ENCODE measurements at regions of chrX and their contacts with region 1.

Region 1: DNA sequence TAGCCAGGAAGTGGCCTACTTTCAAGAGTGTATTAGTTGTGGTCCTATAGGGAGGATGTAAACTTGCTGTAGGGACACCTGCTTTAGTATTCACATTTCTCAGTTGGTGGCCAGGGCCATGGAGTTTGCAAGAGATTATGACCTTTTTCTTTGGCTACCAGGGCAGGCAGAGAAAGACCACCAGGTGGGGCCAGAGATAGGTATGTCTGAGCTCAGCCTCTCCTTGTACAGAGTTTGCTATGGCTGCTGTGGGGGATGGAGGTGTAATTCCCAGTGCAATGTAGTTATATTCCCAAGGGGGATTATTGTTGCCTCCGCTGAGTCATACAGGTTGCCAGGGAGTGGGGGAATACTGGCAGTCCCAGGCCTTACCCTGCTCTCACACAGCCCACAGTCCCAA is 26.3 kb upstream of the DACH2 start:
- DNase-seq: no peak
- H3K4me3 ChIP-seq: no peak overlapping the region
- H3K27ac ChIP-seq: no peak overlapping the region
- H3K4me1 ChIP-seq: no peaks in the 10 kb centered on the region
- H3K27me3 ChIP-seq: no peaks in the 10 kb centered on the region
- CTCF ChIP-seq: no peak
- EP300 ChIP-seq: no peak
- RAD21 ChIP-seq: no peak

Region 2: DNA sequence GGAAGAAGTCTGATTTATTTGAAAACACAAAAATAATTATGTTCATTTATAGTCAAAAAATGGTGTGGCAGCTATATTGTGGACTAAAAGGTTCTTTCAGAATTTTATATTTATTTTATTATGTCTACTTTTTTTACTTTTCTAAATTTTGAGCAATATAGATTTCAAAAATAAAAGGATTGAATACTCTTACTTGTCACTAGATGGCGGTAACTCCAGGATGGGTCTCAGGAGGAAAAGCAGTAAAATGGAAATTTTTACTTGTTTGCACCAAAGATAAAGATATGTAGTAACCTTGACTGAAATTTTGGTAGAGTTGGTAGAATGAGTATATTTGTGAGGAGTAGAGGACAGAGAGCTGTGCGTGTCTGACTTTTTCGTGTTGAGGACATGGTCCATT is 11.8 kb after region 1 on chrX:
- CTCF ChIA-PET with region 1: interaction called, 13 read pairs
- POLR2A ChIA-PET with region 1: no interaction called
- DNase-seq: peak; percentile 17
- H3K4me3 ChIP-seq: no peak overlapping the region
- H3K27ac ChIP-seq: no peak overlapping the region
- H3K4me1 ChIP-seq: no peaks in the 10 kb centered on the region
- H3K27me3 ChIP-seq: no peaks in the 10 kb centered on the region; the same call in 1 of the 2 replicates
- CTCF ChIP-seq: peak; percentile 77
- EP300 ChIP-seq: no peak
- RAD21 ChIP-seq: peak; percentile 44; the same call in 1 of the 2 replicates

Measured in SK-N-SH (cell line).